Activated CD8-positive, alpha-beta T cell treated with anti-CD3 and anti-CD28 coated beads, Interleukin-2, amount 10 ng/mL, durations not matched to agents 7 days and 5 days (primary cell): ENCODE measurements at regions of chr14 and their contacts with region 1.

Region 1: DNA sequence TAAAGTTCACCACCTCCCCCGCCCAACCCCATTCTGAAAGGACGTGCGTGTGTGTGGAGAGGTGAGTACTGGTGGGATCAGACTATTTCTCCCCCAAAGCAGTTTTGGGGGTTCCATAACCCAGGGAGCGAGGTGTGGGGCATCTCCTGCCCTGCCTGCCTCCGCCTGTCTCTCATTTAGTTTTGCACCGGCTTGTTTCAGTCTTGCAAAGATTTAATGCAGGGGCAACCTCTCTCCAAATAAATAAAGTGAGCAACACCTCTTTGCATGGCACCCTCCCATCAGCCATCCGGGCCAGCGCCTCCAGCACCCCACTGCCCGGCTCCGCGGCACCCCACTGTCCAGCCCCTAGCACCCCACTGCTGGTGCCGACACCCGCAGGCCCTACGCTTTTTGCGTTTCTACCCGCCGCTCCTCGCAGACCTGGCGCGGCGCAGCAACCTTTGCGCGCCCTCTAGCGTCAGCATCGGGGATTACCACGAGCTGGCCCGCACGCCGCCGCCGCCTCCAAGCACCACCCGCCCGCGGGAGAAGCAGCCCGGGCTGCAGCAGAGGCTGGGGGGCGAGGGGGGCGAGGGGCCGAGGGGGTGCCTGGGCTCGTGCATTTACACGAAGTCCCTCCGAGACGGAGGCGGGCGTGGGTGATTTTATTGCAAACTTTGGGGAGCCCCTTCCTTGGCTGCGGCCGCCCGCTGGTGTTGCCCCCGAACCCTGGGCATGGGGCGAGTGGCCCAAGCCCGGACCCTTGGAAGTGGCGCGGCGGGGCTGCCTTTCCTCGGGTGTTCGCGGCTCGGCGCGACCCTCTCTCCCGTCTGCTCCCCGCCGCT is 55.8 kb upstream of the VRK1 start:
- DNase-seq: peak; percentile 76
- ATAC-seq: peak; percentile 91
- H3K4me3 Mint-ChIP-seq: peak overlapping the region; percentile 54
- H3K27ac Mint-ChIP-seq: no peak overlapping the region
- H3K4me1 Mint-ChIP-seq: peaks cover 2% of the 10 kb centered on the region
- H3K27me3 Mint-ChIP-seq: peaks cover 63% of the 10 kb centered on the region

Region 2: GRCh38 chr14:96588410-96589257 is 152.7 kb before region 1 on chr14:
- CTCF ChIA-PET with region 1: interaction called, 12 read pairs
- POLR2A ChIA-PET with region 1: no interaction called
- DNase-seq: no peak
- ATAC-seq: no peak
- H3K4me3 Mint-ChIP-seq: no peak overlapping the region
- H3K27ac Mint-ChIP-seq: no peak overlapping the region
- H3K4me1 Mint-ChIP-seq: peaks cover 27% of the 10 kb centered on the region
- H3K27me3 Mint-ChIP-seq: peaks cover 37% of the 10 kb centered on the region